ENCODE measurements at regions of chr15 and their contacts with region 1.

Region 1: GRCh38 chr15:69413822-69414700 is at the start of gene KIF23:
- DNase-seq: peak; percentile 87
- ATAC-seq: peak; percentile 98
- H3K4me3 Mint-ChIP-seq: peak within 1 kb of the TSS; percentile 89
- H3K27ac Mint-ChIP-seq: peak within 1 kb of the TSS; percentile 50
- H3K4me1 Mint-ChIP-seq: peaks cover 11% of the 10 kb centered on the region
- H3K27me3 Mint-ChIP-seq: peaks cover 8% of the 10 kb centered on the region
- CTCF ChIP-seq: no peak
- total RNA-seq, gene KIF23: 1.0 and 1.5 TPM in 2 replicates

Region 2: GRCh38 chr15:69394556-69395282 is 19.3 kb before region 1 on chr15:
- CTCF ChIA-PET with region 1: interaction called, 3 read pairs
- POLR2A ChIA-PET with region 1: no interaction called
- intact Hi-C with region 1: loop called (anchors 2 kb)
- DNase-seq: peak; percentile 82
- ATAC-seq: peak; percentile 100
- H3K4me3 Mint-ChIP-seq: no peak overlapping the region
- H3K27ac Mint-ChIP-seq: no peak overlapping the region
- H3K4me1 Mint-ChIP-seq: peaks cover 7% of the 10 kb centered on the region
- H3K27me3 Mint-ChIP-seq: peaks cover 6% of the 10 kb centered on the region
- CTCF ChIP-seq: peak; percentile 63

Region 3: GRCh38 chr15:69443032-69443611 is 29.1 kb after region 1 on chr15:
- CTCF ChIA-PET with region 1: no interaction called
- POLR2A ChIA-PET with region 1: no interaction called
- intact Hi-C with region 1: loop called (anchors 1 kb)
- DNase-seq: no peak
- ATAC-seq: peak; percentile 95
- H3K4me3 Mint-ChIP-seq: peak overlapping the region; percentile 32
- H3K27ac Mint-ChIP-seq: peak overlapping the region; percentile 72
- H3K4me1 Mint-ChIP-seq: peaks cover 18% of the 10 kb centered on the region
- H3K27me3 Mint-ChIP-seq: no peaks in the 10 kb centered on the region
- CTCF ChIP-seq: no peak

Region 4: GRCh38 chr15:69452692-69453521 is 38.8 kb after region 1 on chr15 and contains the start of gene RPLP1:
- CTCF ChIA-PET with region 1: no interaction called
- POLR2A ChIA-PET with region 1: interaction called, 43 read pairs
- intact Hi-C with region 1: loop called (anchors 1 kb)
- DNase-seq: peak; percentile 94
- ATAC-seq: peak; percentile 90
- H3K4me3 Mint-ChIP-seq: peak within 1 kb of the TSS; percentile 98
- H3K27ac Mint-ChIP-seq: peak within 1 kb of the TSS; percentile 99
- H3K4me1 Mint-ChIP-seq: peaks cover 46% of the 10 kb centered on the region
- H3K27me3 Mint-ChIP-seq: no peaks in the 10 kb centered on the region
- CTCF ChIP-seq: no peak
- total RNA-seq, gene RPLP1: 3,035 and 3,437 TPM in 2 replicates

Region 5: DNA sequence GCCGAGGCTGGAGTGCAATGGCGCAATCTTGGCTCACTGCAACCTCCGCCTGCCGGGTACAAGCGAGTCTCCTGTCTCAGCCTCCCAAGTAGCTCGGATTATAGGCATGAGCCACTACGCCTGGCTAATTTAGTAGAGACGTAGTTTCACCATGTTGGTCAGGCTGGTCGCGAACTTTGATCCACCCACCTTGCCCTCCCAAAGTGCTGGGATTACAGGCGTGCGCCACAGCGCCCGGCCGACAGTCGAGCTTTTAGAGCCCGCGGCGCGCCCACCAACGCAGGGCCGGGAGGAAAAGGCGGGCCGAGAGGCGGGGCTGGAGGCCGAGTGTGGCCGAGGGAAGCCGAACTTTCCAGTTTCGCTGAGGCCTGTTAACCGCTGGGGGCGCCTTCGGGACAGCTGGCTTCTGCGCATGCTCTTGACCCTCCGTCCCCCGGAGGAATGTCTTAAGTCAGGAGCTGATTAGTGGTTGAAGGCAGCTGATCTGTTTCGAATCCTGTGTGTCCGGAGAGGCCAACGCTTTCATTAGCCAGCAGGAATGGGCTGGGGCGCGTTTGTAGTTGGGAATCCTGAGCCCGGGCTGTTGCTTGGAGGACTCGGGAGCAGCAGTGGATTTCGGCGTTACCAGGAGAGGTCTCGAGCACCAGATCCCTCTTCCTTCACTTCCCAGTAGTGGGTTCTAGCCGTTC is 48.6 kb after region 1 on chr15:
- CTCF ChIA-PET with region 1: no interaction called
- POLR2A ChIA-PET with region 1: interaction called, 9 read pairs
- intact Hi-C with region 1: loop called (anchors 2 kb)
- DNase-seq: peak; percentile 87
- ATAC-seq: peak; percentile 99
- H3K4me3 Mint-ChIP-seq: peak overlapping the region; percentile 91
- H3K27ac Mint-ChIP-seq: peak overlapping the region; percentile 82
- H3K4me1 Mint-ChIP-seq: peaks cover 23% of the 10 kb centered on the region
- H3K27me3 Mint-ChIP-seq: no peaks in the 10 kb centered on the region
- CTCF ChIP-seq: peak; percentile 78